Gastrocnemius medialis (tissue), 4 donors: ENCODE measurements at regions of chr3 and their contacts with region 1.

Region 1: DNA sequence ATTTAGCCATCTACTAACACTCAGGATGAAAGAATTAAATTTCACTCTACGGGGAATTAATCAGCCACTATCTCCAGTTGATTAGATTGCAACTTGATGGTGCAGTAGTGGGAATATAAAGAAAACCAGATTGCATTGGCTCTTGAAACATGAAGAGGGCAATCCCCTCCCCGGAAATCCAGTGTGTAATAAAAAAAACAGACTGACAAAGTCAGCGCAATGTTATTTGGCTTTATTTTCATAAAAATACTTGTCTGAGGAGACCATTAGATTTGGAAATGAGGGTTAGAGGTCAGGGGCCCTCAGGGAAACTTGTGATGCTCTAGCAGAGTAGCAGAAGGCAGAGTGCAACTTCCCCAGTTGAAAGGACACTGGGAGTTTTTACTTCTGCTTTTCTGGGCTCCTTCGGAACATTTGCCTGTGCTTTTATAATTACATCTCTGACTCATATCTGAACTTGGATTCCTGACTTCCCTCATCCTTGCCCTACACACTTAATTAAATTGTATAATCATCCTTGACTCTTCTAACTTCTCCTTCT is 326.8 kb downstream of the TUSC7 start:
- DNase-seq: peak; percentile 36 to 37
- ATAC-seq: peak; percentile 46 to 83
- H3K4me3 ChIP-seq: no peak overlapping the region
- H3K27ac ChIP-seq: peak overlapping the region in 1 of 4 donors; percentile 14
- H3K4me1 ChIP-seq: peaks cover 0 to 4% of the 10 kb centered on the region in 2 donors
- H3K27me3 ChIP-seq: no peaks in the 10 kb centered on the region
- CTCF ChIP-seq: no peak
- POLR2A ChIP-seq: no peak

Region 2: DNA sequence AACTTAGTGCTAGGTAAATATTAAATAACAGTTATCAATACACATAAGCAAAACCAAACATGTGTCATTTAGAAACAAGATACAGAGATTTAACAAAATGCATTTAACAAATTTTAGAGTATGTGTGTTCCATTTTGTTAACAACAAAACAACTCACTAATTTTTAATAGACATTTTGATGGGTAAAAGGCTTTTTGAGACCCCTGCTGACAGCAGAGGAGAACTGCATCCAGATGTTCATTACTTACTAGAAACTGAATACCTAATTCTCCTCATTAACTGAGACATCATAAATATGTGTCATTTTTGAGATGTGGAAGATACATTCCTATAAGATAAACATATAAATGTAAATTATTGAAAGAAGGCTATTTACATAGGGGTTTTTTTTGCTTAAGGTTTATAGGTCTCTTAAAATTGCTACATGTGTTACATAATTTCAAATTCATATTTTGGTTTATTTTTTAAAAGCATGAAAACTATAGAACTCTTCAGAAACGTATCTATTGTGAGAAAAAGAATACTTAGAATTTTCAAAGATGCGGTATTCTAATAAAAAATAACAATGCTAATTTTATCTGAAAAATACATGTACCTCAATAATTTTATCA is 683.1 kb after region 1 on chr3:
- in situ Hi-C with region 1: loop called in 1 of 4 experiments (anchors 25 kb)
- intact Hi-C with region 1: no loop called
- DNase-seq: no peak
- ATAC-seq: no peak
- H3K4me3 ChIP-seq: no peak overlapping the region
- H3K27ac ChIP-seq: no peak overlapping the region
- H3K4me1 ChIP-seq: no peaks in the 10 kb centered on the region
- H3K27me3 ChIP-seq: no peaks in the 10 kb centered on the region
- CTCF ChIP-seq: peak in 4 of 5 experiments; percentile 20 to 45 (median 32)
- POLR2A ChIP-seq: no peak